HEK293T (cell line): ENCODE measurements at regions of chr15 and their contacts with region 1.

Region 1: DNA sequence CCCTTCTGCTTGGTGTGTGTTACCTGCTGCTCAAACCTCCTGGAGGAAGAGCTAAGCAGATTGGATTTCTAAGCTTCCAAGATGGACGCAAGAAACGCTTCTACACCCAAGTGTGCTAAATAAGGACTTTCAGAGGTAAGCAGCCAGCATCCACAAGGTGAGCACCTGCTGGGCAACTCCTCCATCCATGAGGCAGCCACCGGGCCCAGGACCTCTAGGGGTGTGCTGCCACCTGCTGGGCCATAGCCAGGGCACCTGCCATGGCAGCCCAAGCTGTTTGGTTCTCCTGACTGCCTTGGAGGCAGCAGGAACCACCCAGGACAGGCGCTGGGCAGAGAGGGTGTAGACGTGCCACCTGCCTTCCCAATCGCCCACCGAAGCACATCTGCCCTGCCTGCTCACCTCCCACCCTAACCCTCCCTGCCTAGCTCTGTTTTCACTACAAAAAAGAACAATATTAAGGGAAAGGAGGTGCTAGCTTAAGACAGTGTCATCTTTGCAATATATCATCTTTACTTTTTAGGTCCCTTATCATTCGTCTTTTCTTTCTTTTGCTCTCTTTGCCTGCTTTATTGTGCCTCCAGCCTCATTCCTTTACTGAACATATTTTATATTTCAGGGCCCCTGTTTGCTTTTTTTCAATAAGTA is 12.9 kb downstream of the C15orf62 start:
- DNase-seq: peak; percentile 44

Region 2: DNA sequence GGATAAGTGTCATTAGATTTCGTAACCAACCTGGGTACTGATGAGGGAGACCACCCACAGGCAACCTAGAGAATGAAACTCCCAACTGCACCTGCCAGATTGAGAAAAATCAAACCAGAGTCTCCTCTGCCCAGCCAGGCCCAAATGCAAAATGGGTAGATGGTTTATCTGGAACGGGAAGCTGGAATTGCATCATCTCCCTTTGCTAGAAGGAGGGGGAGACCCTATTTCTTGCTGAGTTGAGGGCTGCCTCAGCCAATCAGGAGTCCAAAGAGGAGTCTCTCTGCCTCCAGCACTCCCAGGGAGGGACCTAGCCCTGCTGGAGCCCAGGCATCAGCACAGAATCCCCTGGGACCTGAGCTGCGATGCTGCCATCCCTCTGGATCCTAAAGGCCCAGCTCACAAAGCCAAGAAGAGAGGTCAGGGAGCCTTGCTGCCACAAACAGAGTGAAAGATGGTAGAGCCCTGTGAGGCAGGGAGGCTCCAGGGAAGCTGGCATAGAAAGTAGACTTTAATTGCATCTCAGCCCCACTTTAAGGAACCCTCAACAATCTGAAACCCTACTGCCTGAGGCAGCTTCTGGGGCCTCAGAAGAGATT is 35.7 kb before region 1 on chr15:
- CTCF ChIA-PET with region 1: interaction called, 10 read pairs
- POLR2A ChIA-PET with region 1: no interaction called
- DNase-seq: no peak

Region 3: DNA sequence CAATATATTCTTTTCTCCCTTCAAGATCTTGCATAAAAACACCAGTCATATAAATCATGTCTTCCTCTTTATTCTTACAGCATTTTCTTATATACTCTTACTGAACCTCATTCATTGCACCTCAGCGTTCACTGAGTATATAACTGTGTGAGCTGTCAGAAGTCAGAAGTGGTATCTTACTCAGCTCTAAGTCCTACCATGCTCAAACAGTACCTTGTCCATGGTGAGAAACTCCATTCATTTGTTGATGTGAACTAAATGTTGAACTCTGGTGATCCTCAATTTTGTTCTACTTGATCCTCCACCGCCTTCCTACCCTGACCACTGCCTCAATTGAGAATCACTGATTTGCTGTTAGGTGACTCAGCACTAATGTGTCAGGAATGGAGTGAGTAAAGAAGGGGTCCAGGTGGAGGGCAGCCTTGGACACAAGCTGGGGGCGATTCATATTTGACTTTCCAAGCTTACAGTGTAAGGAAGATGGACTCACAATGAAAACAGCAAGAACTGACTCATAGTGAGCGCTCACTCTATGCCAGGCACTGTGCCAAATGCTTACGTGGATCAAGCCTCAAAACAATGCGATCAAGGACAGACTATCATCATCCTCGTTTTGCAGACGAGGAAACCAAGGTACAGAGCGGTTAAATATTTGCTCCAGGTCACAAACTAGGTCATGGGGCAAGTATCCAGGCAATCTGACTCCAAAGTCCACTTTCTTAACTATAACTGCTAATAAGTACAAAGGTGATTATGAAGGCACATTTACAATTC is 10.7 kb after region 1 on chr15:
- CTCF ChIA-PET with region 1: no interaction called
- POLR2A ChIA-PET with region 1: no interaction called
- DNase-seq: no peak

Region 4: DNA sequence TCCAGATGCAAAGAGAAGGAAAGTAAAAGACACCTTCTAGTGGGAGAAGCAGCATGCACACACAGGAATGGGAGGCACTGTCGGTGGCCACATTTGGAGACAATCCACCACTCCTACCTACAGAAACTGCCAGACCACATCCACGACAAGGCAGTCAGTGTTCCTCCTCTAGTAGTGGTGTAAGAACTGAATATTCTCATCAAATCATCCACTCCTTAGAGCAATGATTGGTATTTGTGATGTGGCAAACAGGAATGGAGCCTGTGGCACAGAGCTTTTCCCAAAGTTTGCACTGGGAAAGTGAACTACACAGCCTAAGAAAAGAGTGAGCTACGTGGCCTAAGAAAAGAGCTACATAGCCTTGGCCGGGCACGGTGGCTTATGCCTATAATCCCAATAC is 56.1 kb after region 1 on chr15:
- CTCF ChIA-PET with region 1: no interaction called
- POLR2A ChIA-PET with region 1: no interaction called
- DNase-seq: no peak

Region 5: GRCh38 chr15:41022487-41023090 is 239.9 kb after region 1 on chr15:
- CTCF ChIA-PET with region 1: no interaction called
- POLR2A ChIA-PET with region 1: no interaction called
- DNase-seq: peak; percentile 45